GM12878 (cell line): ENCODE measurements at regions of chr20 and their contacts with region 1.

Region 1: GRCh38 chr20:7392542-7393206 is 547.6 kb downstream of the HAO1 start:
- DNase-seq: no peak
- ATAC-seq: no peak; the same call in 2 of the 3 replicates
- H3K4me3 ChIP-seq: no peak overlapping the region
- H3K27ac ChIP-seq: no peak overlapping the region
- H3K4me1 ChIP-seq: no peaks in the 10 kb centered on the region
- H3K27me3 ChIP-seq: no peaks in the 10 kb centered on the region
- CTCF ChIP-seq: no peak
- EP300 ChIP-seq: no peak
- POLR2A ChIP-seq: no peak
- RAD21 ChIP-seq: no peak

Region 2: GRCh38 chr20:7333841-7334240 is 58.8 kb before region 1 on chr20:
- CTCF ChIA-PET with region 1: no interaction called
- POLR2A ChIA-PET with region 1: no interaction called
- RAD21 ChIA-PET with region 1: no interaction called
- SMC1A ChIA-PET with region 1: no interaction called
- in situ Hi-C with region 1: loop called (anchors 10 kb)
- intact Hi-C with region 1: no loop called
- DNase-seq: no peak
- ATAC-seq: no peak
- H3K4me3 ChIP-seq: no peak overlapping the region
- H3K27ac ChIP-seq: no peak overlapping the region
- H3K4me1 ChIP-seq: no peaks in the 10 kb centered on the region
- H3K27me3 ChIP-seq: no peaks in the 10 kb centered on the region
- CTCF ChIP-seq: no peak
- EP300 ChIP-seq: no peak
- POLR2A ChIP-seq: no peak
- RAD21 ChIP-seq: no peak

Region 3: DNA sequence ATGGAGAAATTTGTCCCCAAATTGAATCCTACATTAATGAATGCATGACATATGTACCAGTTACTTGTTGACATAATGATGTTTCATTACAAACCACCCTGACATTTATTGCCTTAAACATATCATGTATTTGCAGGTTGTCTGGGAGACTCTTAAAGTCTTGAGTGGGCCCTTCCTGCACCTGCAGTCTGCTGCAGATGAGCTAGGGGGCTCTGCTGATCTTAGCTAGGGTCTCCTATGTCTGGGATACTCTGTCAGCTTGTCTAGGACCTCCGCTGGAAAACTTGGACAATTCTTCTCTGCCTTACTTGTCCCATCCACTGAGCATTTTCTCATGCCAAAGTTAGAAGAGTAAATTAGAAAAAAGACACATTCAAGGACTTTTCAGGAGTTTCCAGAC is 34.0 kb before region 1 on chr20:
- CTCF ChIA-PET with region 1: no interaction called
- POLR2A ChIA-PET with region 1: no interaction called
- RAD21 ChIA-PET with region 1: no interaction called
- SMC1A ChIA-PET with region 1: no interaction called
- in situ Hi-C with region 1: no loop called
- intact Hi-C with region 1: no loop called
- DNase-seq: no peak
- ATAC-seq: no peak
- H3K4me3 ChIP-seq: no peak overlapping the region
- H3K27ac ChIP-seq: no peak overlapping the region
- H3K4me1 ChIP-seq: no peaks in the 10 kb centered on the region
- H3K27me3 ChIP-seq: no peaks in the 10 kb centered on the region
- CTCF ChIP-seq: no peak
- EP300 ChIP-seq: no peak
- POLR2A ChIP-seq: no peak
- RAD21 ChIP-seq: peak; percentile 41; the same call in 1 of the 2 replicates